H1 (cell line): ENCODE measurements at regions of chr13 and their contacts with region 1.

Region 1: GRCh38 chr13:25574437-25575411 is 202.9 kb downstream of the ATP8A2 start:
- DNase-seq: peak; percentile 80 to 89
- H3K4me3 ChIP-seq: no peak overlapping the region
- H3K27ac ChIP-seq: no peak overlapping the region
- H3K4me1 ChIP-seq: no peaks in the 10 kb centered on the region; a peak in 1 of 7 replicates
- H3K27me3 ChIP-seq: no peaks in the 10 kb centered on the region
- CTCF ChIP-seq: peak; percentile 52 to 96 (median 92)
- EP300 ChIP-seq: no peak
- POLR2A ChIP-seq: no peak
- RAD21 ChIP-seq: peak; percentile 99 to 100

Region 2: GRCh38 chr13:25432691-25433090 is 142.0 kb before region 1 on chr13:
- CTCF ChIA-PET with region 1: no interaction called
- POLR2A ChIA-PET with region 1: no interaction called
- DNase-seq: no peak
- H3K4me3 ChIP-seq: no peak overlapping the region
- H3K27ac ChIP-seq: no peak overlapping the region
- H3K4me1 ChIP-seq: no peaks in the 10 kb centered on the region
- H3K27me3 ChIP-seq: no peaks in the 10 kb centered on the region
- CTCF ChIP-seq: no peak
- EP300 ChIP-seq: no peak
- POLR2A ChIP-seq: no peak
- RAD21 ChIP-seq: no peak

Region 3: DNA sequence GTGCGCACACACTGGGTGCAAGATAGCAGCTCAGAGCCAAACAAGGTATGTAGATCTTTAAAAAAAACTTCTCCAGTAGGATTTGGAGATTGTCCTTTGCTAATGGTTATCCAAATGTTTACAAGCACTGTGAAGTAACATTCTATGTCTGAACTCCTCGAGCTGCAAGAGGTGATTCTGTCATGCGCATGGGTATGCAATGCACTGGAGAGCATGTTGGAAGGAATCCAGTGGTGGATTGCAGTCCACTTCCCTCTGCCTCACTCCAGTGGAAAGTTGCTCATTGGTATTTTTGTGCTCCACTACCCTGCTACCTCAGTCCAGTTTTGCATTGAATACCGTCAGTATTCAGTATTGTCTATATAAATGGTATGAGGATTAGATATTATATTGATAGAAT is 70.9 kb before region 1 on chr13:
- CTCF ChIA-PET with region 1: no interaction called
- POLR2A ChIA-PET with region 1: no interaction called
- DNase-seq: no peak
- H3K4me3 ChIP-seq: no peak overlapping the region
- H3K27ac ChIP-seq: no peak overlapping the region
- H3K4me1 ChIP-seq: peaks cover 0 to 5% (median 0%) of the 10 kb centered on the region in 4 experiments; a peak in 2 of 7 replicates
- H3K27me3 ChIP-seq: no peaks in the 10 kb centered on the region
- CTCF ChIP-seq: no peak
- EP300 ChIP-seq: no peak
- POLR2A ChIP-seq: no peak
- RAD21 ChIP-seq: no peak

Region 4: DNA sequence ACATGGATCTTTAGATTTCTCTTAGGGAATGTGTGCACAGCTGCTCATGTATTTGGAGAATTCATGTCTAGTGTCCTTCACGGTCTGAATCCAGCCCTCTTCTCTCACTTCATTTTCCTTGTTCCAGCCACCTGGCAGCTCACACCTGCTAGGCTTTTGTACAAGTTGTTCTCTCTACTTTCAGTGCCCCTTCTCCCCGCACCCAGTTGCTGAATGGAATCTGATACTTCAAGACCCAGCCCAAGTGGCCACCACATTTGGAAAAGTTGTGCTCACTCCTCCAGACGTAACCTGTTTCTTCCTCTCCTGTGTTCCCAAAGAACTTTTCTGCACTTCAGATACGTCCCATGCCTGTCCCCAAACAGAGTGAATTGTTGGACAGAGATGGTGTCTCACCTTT is 241.5 kb after region 1 on chr13:
- CTCF ChIA-PET with region 1: no interaction called
- POLR2A ChIA-PET with region 1: no interaction called
- DNase-seq: no peak
- H3K4me3 ChIP-seq: no peak overlapping the region
- H3K27ac ChIP-seq: no peak overlapping the region
- H3K4me1 ChIP-seq: peaks cover 0 to 4% (median 0%) of the 10 kb centered on the region in 4 experiments; a peak in 2 of 7 replicates
- H3K27me3 ChIP-seq: no peaks in the 10 kb centered on the region
- CTCF ChIP-seq: no peak
- EP300 ChIP-seq: no peak
- POLR2A ChIP-seq: no peak
- RAD21 ChIP-seq: no peak

Region 5: GRCh38 chr13:26062844-26063444 is 488.2 kb after region 1 on chr13:
- CTCF ChIA-PET with region 1: interaction called, 29 read pairs
- POLR2A ChIA-PET with region 1: no interaction called
- DNase-seq: no peak
- H3K4me3 ChIP-seq: no peak overlapping the region
- H3K27ac ChIP-seq: no peak overlapping the region
- H3K4me1 ChIP-seq: no peaks in the 10 kb centered on the region
- H3K27me3 ChIP-seq: no peaks in the 10 kb centered on the region; a peak in 1 of 7 replicates
- CTCF ChIP-seq: peak in 2 of 3 experiments; percentile 66 to 73; a peak in 2 of 4 replicates
- EP300 ChIP-seq: no peak
- POLR2A ChIP-seq: no peak
- RAD21 ChIP-seq: peak; percentile 90

Region 6: GRCh38 chr13:26074706-26075105 is 500.0 kb after region 1 on chr13:
- CTCF ChIA-PET with region 1: interaction called, 29 read pairs
- POLR2A ChIA-PET with region 1: no interaction called
- DNase-seq: no peak
- H3K4me3 ChIP-seq: no peak overlapping the region
- H3K27ac ChIP-seq: no peak overlapping the region
- H3K4me1 ChIP-seq: peaks cover 0 to 7% (median 1%) of the 10 kb centered on the region in 4 experiments; a peak in 2 of 7 replicates
- H3K27me3 ChIP-seq: no peaks in the 10 kb centered on the region
- CTCF ChIP-seq: no peak
- EP300 ChIP-seq: no peak
- POLR2A ChIP-seq: no peak
- RAD21 ChIP-seq: no peak

Region 7: DNA sequence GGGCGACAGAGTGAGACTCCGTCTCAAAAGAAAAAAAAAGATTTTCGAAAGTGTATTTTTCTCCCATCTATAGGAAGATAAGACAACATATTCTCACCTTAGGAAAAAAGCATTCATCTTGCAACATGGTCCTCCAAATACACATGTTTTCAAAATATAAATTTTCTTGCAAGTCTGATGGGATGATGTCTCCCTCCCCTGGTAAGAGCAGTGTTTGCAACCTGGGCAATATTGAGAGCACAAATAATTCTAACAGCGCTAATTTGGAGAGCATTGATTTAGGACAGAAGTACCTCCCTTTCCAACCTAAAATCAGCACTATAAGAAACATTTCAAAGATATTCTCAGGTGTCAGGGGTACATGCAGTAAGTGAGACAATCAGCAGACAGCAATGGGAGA is 538.1 kb after region 1 on chr13:
- CTCF ChIA-PET with region 1: interaction called, 12 read pairs
- POLR2A ChIA-PET with region 1: no interaction called
- DNase-seq: no peak
- H3K4me3 ChIP-seq: no peak overlapping the region
- H3K27ac ChIP-seq: no peak overlapping the region
- H3K4me1 ChIP-seq: no peaks in the 10 kb centered on the region
- H3K27me3 ChIP-seq: no peaks in the 10 kb centered on the region
- CTCF ChIP-seq: peak in 2 of 3 experiments; percentile 44 to 69; a peak in 2 of 4 replicates
- EP300 ChIP-seq: no peak
- POLR2A ChIP-seq: no peak
- RAD21 ChIP-seq: peak; percentile 80 to 81